ENCODE measurements at regions of chr19 and their contacts with region 1.

Region 1: GRCh38 chr19:7394731-7395359 is 46.1 kb downstream of the ARHGEF18 start:
- DNase-seq: peak; percentile 80
- ATAC-seq: peak; percentile 80
- H3K4me3 ChIP-seq: peak overlapping the region; percentile 96
- H3K27ac ChIP-seq: peak overlapping the region; percentile 80
- H3K4me1 ChIP-seq: peaks cover 11% of the 10 kb centered on the region
- H3K27me3 ChIP-seq: no peaks in the 10 kb centered on the region
- CTCF ChIP-seq: peak in 1 of 3 experiments; percentile 11; a peak in 1 of 6 replicates
- EP300 ChIP-seq: no peak
- POLR2A ChIP-seq: peak; percentile 93
- RAD21 ChIP-seq: no peak

Region 2: DNA sequence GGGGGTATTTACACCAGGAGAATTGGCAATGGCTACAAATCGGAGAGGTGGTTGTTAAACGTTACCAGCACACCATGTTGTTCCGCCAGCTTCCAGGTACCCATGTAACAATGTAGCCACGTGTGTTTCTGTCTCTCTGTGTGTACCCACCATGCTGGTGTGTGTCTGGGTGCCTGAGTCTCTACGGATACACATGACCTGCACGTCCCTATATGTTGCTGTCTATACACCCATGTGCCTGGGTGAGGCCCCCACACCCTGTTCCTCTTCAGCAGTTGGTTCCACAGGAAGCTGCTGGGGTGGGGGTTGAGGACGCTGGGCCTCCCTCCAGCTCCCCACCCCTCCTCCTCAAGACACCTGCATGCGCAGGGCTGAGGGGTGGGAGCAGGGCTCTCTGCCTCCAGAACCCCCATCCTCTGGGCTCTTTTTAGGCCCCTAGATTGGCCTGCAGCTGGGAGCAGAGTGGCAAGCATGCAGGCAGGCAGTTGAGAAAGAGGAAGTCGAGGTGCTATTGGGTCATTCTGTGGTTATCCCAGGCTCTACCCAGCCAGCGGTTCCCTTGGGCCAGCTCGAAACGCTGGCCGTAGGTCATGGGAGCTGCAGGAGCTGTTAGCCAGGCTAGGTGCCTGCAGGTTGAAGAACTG is 46.1 kb before region 1 on chr19 and contains the start of gene ARHGEF18:
- CTCF ChIA-PET with region 1: interaction called, 5 read pairs
- POLR2A ChIA-PET with region 1: interaction called, 10 read pairs
- RAD21 ChIA-PET with region 1: interaction called, 5 read pairs
- SMC1A ChIA-PET with region 1: interaction called, 3 read pairs
- in situ Hi-C with region 1: no loop called
- intact Hi-C with region 1: no loop called
- DNase-seq: peak; percentile 59
- ATAC-seq: peak; percentile 60
- H3K4me3 ChIP-seq: peak within 1 kb of the TSS; percentile 43; the same call in 1 of the 2 replicates
- H3K27ac ChIP-seq: peak within 1 kb of the TSS; percentile 77
- H3K4me1 ChIP-seq: peaks cover 58% of the 10 kb centered on the region
- H3K27me3 ChIP-seq: no peaks in the 10 kb centered on the region
- CTCF ChIP-seq: no peak
- EP300 ChIP-seq: peak in 1 of 2 experiments; percentile 36; a peak in 1 of 4 replicates
- POLR2A ChIP-seq: peak; percentile 72; the same call in 1 of the 2 replicates
- RAD21 ChIP-seq: no peak
- polyA plus RNA-seq, gene ARHGEF18: 0.31 to 0.57 TPM

Region 3: GRCh38 chr19:7408251-7408650 is 13.4 kb after region 1 on chr19:
- CTCF ChIA-PET with region 1: interaction called, 4 read pairs
- POLR2A ChIA-PET with region 1: interaction called, 4 read pairs
- RAD21 ChIA-PET with region 1: interaction called, 5 read pairs
- SMC1A ChIA-PET with region 1: interaction called, 10 read pairs
- in situ Hi-C with region 1: no loop called
- intact Hi-C with region 1: no loop called
- DNase-seq: no peak
- ATAC-seq: peak; percentile 69
- H3K4me3 ChIP-seq: no peak overlapping the region
- H3K27ac ChIP-seq: peak overlapping the region; percentile 62; the same call in 1 of the 2 replicates
- H3K4me1 ChIP-seq: peaks cover 21% of the 10 kb centered on the region
- H3K27me3 ChIP-seq: no peaks in the 10 kb centered on the region
- CTCF ChIP-seq: no peak
- EP300 ChIP-seq: no peak
- POLR2A ChIP-seq: no peak
- RAD21 ChIP-seq: no peak

Region 4: DNA sequence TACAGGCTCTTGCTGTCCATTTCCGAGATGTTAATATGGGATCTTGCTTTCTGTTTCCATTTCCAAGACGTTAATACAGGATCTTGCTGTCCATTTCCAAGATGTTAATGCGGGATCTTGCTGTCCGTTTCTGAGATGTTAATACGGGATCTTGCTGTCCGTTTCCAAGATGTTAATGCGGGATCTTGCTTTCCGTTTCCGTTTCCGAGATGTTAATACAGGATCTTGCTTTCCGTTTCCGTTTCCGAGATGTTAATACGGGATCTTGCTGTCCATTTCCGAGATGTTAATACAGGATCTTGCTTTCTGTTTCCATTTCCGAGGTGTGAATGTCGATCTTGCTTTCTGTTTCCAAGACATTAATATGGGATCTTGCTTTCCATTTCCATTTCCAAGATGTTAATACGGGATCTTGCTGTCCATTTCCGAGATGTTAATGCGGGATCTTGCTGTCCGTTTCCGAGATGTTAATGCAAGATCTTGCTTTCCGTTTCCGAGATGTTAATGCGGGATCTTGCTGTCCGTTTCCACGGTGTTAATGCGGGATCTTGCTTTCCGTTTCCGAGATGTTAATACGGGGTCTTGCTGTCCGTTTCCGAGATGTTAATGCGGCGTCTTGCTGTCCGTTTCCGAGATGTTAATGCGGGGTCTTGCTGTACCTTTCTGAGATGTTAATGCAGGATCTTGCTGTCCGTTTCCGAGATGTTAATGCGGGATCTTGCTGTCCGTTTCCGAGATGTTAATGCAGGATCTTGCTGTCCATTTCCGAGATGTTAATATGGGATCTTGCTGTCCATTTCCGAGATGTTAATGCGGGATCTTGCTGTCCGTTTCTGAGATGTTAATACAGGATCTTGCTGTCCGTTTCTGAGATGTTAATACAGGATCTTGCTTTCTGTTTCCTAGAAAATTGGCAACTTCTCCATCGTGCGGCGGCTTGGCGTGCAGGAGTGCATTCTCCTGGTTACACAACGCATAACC is 55.7 kb after region 1 on chr19:
- CTCF ChIA-PET with region 1: no interaction called
- POLR2A ChIA-PET with region 1: no interaction called
- RAD21 ChIA-PET with region 1: no interaction called
- SMC1A ChIA-PET with region 1: no interaction called
- in situ Hi-C with region 1: no loop called
- intact Hi-C with region 1: no loop called
- DNase-seq: peak; percentile 49
- ATAC-seq: no peak
- H3K4me3 ChIP-seq: no peak overlapping the region
- H3K27ac ChIP-seq: no peak overlapping the region
- H3K4me1 ChIP-seq: no peaks in the 10 kb centered on the region
- H3K27me3 ChIP-seq: no peaks in the 10 kb centered on the region
- CTCF ChIP-seq: no peak
- EP300 ChIP-seq: no peak
- POLR2A ChIP-seq: no peak
- RAD21 ChIP-seq: no peak

Measured in GM12878 (cell line).